Heart left ventricle (tissue), 16 donors: ENCODE measurements at regions of chr5 and their contacts with region 1.

Region 1: GRCh38 chr5:59275510-59276324 is 617.8 kb downstream of the PDE4D start:
- DNase-seq: peak in 4 of 5 donors; percentile 51 to 57 (median 51)
- ATAC-seq: peak; percentile 76 to 89 (median 85)
- H3K4me3 ChIP-seq: peak overlapping the region in 11 of 12 donors; percentile 26 to 65 (median 52)
- H3K27ac ChIP-seq: peak overlapping the region; percentile 26 to 86 (median 74)
- H3K4me1 ChIP-seq: peaks cover 0 to 29% (median 12%) of the 10 kb centered on the region in 12 donors
- H3K27me3 ChIP-seq: no peaks in the 10 kb centered on the region
- CTCF ChIP-seq: no peak
- POLR2A ChIP-seq: no peak

Region 2: GRCh38 chr5:59218424-59219045 is 57.2 kb before region 1 on chr5:
- intact Hi-C with region 1: loop called in 5 of 10 experiments (anchors 5 to 10 kb)
- DNase-seq: no peak
- ATAC-seq: no peak
- H3K4me3 ChIP-seq: no peak overlapping the region
- H3K27ac ChIP-seq: no peak overlapping the region
- H3K4me1 ChIP-seq: peaks cover 0 to 28% (median 9%) of the 10 kb centered on the region in 12 donors
- H3K27me3 ChIP-seq: no peaks in the 10 kb centered on the region
- CTCF ChIP-seq: peak; percentile 35 to 62 (median 48)
- POLR2A ChIP-seq: no peak

Region 3: DNA sequence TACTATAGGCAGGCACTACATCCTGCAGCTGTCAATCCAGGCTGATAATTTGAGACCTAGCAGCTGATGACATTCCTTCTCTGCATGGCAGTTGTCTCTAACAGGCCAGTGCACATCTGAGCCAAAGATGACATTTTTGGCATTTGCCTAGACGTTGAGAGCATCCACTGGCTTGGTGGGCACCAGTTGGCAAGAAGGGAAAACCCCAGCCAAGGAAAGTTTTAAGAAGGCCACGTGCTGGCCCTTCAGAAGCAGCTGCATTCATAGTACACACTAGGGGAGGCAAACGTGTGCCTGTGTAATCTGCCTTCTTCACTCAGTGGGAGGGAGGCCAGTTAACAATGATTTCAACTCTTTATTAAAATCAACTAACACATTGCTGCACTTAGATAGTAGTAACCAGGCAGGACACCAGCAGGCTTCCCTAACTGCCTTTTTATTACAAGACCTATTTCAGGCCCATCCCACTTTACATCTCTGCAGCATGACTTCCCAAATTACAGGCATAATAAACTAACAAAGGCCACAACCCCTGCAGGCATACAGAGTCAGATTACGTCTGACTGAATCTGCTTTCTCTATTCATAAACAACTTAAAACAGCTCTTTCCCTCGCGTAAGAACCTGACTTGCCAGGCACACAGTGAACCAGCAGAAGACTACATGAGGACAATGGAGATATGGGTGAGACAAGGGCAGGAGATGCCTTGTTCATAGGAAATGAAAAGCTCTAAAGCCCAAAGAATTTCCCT is 41.5 kb after region 1 on chr5:
- intact Hi-C with region 1: loop called in 5 of 10 experiments (anchors 5 kb)
- DNase-seq: peak in 2 of 5 donors; percentile 18 to 24
- ATAC-seq: peak; percentile 42 to 84 (median 74)
- H3K4me3 ChIP-seq: peak overlapping the region in 3 of 12 donors; percentile 2 to 13 (median 4)
- H3K27ac ChIP-seq: peak overlapping the region; percentile 65 to 85 (median 70)
- H3K4me1 ChIP-seq: peaks cover 9 to 77% (median 50%) of the 10 kb centered on the region in 12 donors
- H3K27me3 ChIP-seq: no peaks in the 10 kb centered on the region
- CTCF ChIP-seq: no peak
- POLR2A ChIP-seq: no peak

Region 4: GRCh38 chr5:60417500-60418181 is 1141.9 kb after region 1 on chr5:
- intact Hi-C with region 1: no loop called
- DNase-seq: no peak
- ATAC-seq: no peak
- H3K4me3 ChIP-seq: no peak overlapping the region
- H3K27ac ChIP-seq: no peak overlapping the region
- H3K4me1 ChIP-seq: no peaks in the 10 kb centered on the region
- H3K27me3 ChIP-seq: no peaks in the 10 kb centered on the region
- CTCF ChIP-seq: no peak
- POLR2A ChIP-seq: no peak